ENCODE measurements at regions of chr11 and their contacts with region 1.

Region 1: DNA sequence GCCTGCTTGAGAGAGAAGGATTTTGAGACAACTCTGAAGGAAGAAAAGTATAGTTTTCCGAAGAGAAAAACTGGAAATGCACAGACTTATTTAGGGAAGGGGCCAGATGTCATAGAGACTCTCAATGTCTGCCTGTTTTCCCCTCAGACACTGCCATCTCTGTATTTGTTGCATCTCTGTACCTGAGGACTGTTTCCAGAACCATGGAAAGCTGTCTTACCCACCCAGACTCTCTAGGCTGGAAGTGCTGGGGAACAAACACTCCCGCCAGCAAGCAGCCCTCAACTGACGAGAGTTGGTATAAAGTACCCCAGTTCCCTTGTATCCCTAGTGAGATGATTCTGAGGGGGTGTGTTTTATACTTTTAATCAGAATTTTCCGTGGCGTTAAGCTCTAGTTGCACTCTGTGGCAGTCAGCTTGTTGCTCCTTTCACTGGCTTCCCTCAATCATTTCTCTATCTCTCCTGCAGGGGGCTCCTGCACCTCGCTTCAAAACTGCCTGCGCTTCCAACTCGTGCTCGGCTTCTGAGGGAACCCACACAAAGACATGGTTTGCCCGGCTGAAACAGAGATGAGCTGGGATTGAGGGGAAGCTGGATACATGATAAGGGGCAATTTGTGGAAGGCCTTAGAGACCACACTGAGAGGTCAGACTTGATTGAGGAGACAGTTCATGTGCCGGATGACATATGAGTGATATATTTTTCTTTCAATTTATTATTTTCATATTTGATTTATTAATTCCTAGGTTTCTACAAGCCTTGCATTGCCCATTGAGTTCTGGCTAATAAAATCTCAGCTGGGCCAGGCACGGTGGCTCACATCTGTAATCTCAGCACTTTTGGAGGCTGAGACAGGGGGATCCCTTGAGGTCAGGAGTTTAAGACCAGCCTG is 36.9 kb upstream of the CLPB start:
- DNase-seq: peak; percentile 62
- ATAC-seq: peak; percentile 88

Region 2: DNA sequence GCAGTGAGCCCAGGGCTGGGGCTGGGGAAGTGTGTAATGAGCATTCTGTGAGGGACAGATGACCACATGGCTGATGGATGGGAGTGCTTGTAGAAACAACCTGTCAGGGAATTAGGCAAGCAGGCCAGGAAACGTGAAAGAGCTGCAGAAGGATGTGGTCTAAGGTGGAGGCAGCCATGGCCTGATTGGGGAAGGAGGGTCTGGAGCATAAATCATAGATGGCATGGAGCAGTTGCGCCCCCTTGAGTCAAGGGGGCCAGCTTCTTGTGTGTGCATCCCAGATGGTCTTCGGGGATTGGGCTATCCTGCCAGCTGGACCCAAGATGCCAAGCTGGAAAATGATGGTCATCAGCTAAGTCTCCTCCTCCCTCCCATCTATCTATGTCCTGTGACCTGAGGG is 82.5 kb after region 1 on chr11:
- intact Hi-C with region 1: loop called (anchors 10 kb)
- DNase-seq: peak; percentile 46
- ATAC-seq: no peak